ENCODE measurements at regions of chr7 and their contacts with region 1.

Region 1: GRCh38 chr7:44847508-44847920 is 373 bp downstream of the H2AZ2 start:
- DNase-seq: peak; percentile 90
- ATAC-seq: peak; percentile 65
- H3K4me3 Mint-ChIP-seq: peak overlapping the region; percentile 96
- H3K27ac Mint-ChIP-seq: peak overlapping the region; percentile 97
- H3K4me1 Mint-ChIP-seq: peaks cover 33% of the 10 kb centered on the region
- H3K27me3 Mint-ChIP-seq: no peaks in the 10 kb centered on the region
- CTCF ChIP-seq: no peak

Region 2: GRCh38 chr7:44240983-44241510 is 606.5 kb before region 1 on chr7:
- CTCF ChIA-PET with region 1: no interaction called
- POLR2A ChIA-PET with region 1: no interaction called
- intact Hi-C with region 1: loop called (anchors 5 kb)
- DNase-seq: peak; percentile 41
- ATAC-seq: peak; percentile 87
- H3K4me3 Mint-ChIP-seq: peak overlapping the region; percentile 56
- H3K27ac Mint-ChIP-seq: no peak overlapping the region
- H3K4me1 Mint-ChIP-seq: no peaks in the 10 kb centered on the region
- H3K27me3 Mint-ChIP-seq: no peaks in the 10 kb centered on the region
- CTCF ChIP-seq: no peak

Region 3: GRCh38 chr7:44581879-44582603 is 265.5 kb before region 1 on chr7 and contains the start of gene TMED4:
- CTCF ChIA-PET with region 1: interaction called, 4 read pairs
- POLR2A ChIA-PET with region 1: interaction called, 44 read pairs
- intact Hi-C with region 1: loop called (anchors 1 kb)
- DNase-seq: peak; percentile 100
- ATAC-seq: peak; percentile 90
- H3K4me3 Mint-ChIP-seq: peak within 1 kb of the TSS; percentile 90
- H3K27ac Mint-ChIP-seq: peak within 1 kb of the TSS; percentile 95
- H3K4me1 Mint-ChIP-seq: peaks cover 29% of the 10 kb centered on the region
- H3K27me3 Mint-ChIP-seq: peaks cover 2% of the 10 kb centered on the region
- CTCF ChIP-seq: no peak
- total RNA-seq, gene TMED4: 61.7 and 70.1 TPM in 2 replicates

Region 4: DNA sequence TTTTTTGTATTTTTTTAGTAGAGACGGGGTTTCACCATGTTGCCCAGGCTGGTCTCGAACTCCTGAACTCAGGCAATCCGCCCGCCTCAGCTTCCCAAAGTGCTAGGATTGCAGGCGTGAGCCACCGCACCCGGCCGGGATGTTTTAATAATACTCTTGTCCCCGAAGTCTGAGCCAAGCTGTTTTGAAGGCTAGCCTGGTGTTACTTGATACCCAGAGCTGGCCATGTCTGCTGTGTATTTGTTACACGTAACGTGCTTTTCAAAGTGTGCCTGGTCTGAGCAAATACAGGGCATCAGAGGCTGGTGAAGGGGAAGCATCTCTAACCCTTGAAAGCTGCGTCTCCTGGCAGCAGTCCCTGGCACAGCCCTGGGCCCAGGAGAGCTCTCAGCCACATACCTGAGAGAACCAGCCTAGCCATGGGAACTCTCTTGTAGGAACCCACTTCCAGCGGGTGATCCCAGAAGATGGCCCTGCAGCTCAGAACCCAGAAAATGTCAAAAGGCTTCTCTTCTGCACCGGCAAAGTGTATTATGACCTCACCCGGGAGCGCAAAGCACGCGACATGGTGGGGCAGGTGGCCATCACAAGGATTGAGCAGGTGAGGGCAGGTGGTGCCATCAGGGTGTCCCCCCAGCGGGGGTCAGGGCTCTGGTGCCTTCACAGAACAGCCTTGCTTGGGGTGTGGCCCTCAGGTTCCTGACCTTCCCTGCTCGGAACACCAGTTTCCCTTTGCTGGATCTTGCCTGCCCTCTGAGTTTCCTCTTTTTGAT is 140.5 kb before region 1 on chr7:
- CTCF ChIA-PET with region 1: interaction called, 4 read pairs
- POLR2A ChIA-PET with region 1: interaction called, 4 read pairs
- intact Hi-C with region 1: loop called (anchors 1 kb)
- DNase-seq: no peak
- ATAC-seq: no peak
- H3K4me3 Mint-ChIP-seq: no peak overlapping the region
- H3K27ac Mint-ChIP-seq: no peak overlapping the region
- H3K4me1 Mint-ChIP-seq: no peaks in the 10 kb centered on the region
- H3K27me3 Mint-ChIP-seq: no peaks in the 10 kb centered on the region
- CTCF ChIP-seq: no peak

Region 5: DNA sequence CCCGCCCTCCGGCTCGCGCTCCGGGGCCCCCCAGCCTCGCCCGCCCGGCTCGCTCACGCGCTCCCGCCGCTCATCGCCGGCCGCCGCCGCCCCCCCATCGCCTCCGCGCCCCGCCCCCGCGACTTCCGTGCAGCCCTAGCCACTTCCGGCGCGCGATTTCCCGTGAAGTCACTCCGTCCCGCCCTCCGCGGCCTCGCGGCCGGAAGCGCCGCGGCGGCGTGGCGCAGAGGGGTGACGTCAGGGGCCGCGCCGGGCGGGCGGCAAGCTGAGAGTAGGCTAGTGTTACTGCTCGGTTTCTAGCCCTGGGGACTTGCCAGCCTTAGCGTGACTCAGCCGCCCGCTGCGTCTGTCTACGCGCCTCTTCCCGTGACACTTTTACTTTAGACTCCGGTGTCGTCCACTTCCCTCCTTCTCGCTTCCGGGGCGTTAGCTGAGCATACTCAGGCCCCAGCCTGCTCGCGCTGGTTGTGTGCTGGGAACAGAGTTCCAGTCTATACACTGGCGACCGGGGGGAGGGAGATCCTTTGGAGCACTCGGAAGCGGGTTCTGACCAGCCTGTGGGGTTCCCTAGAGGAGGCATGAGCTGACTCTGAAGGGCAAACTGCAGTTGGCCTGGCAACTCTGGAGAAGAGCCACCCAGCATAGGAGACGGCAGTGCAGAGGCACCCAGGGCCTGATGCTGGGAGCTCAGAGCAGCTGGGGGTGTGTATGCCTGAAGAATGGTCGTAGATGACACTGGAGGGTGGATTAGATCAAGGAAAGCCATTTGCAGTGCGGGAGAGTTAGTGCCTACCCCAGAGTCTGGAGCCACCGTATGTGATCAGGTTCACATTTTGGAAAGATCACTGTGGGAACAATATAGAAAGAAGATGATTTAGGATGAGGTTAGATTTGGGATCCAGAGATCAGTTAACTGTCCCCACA is 38.1 kb after region 1 on chr7 and contains the start of gene PURB:
- CTCF ChIA-PET with region 1: no interaction called
- POLR2A ChIA-PET with region 1: interaction called, 32 read pairs
- intact Hi-C with region 1: loop called (anchors 1 kb)
- DNase-seq: peak; percentile 98
- ATAC-seq: peak; percentile 85
- H3K4me3 Mint-ChIP-seq: peak within 1 kb of the TSS; percentile 95
- H3K27ac Mint-ChIP-seq: peak within 1 kb of the TSS; percentile 99
- H3K4me1 Mint-ChIP-seq: peaks cover 59% of the 10 kb centered on the region
- H3K27me3 Mint-ChIP-seq: no peaks in the 10 kb centered on the region
- CTCF ChIP-seq: no peak
- total RNA-seq, gene PURB: 21.3 and 23.8 TPM in 2 replicates

Region 6: GRCh38 chr7:45111298-45112223 is 264.0 kb after region 1 on chr7 and contains the start of gene TBRG4:
- CTCF ChIA-PET with region 1: no interaction called
- POLR2A ChIA-PET with region 1: interaction called, 4 read pairs
- intact Hi-C with region 1: loop called (anchors 1 kb)
- DNase-seq: peak; percentile 94
- ATAC-seq: peak; percentile 93
- H3K4me3 Mint-ChIP-seq: peak within 1 kb of the TSS; percentile 98
- H3K27ac Mint-ChIP-seq: peak within 1 kb of the TSS; percentile 97
- H3K4me1 Mint-ChIP-seq: peaks cover 44% of the 10 kb centered on the region
- H3K27me3 Mint-ChIP-seq: peaks cover 4% of the 10 kb centered on the region
- CTCF ChIP-seq: no peak
- total RNA-seq, gene TBRG4: 109 and 128 TPM in 2 replicates

Region 7: GRCh38 chr7:45267266-45267665 is 419.8 kb after region 1 on chr7:
- CTCF ChIA-PET with region 1: no interaction called
- POLR2A ChIA-PET with region 1: no interaction called
- intact Hi-C with region 1: no loop called
- DNase-seq: no peak
- ATAC-seq: no peak
- H3K4me3 Mint-ChIP-seq: no peak overlapping the region
- H3K27ac Mint-ChIP-seq: no peak overlapping the region
- H3K4me1 Mint-ChIP-seq: no peaks in the 10 kb centered on the region
- H3K27me3 Mint-ChIP-seq: peaks cover 16% of the 10 kb centered on the region
- CTCF ChIP-seq: no peak

Measured in activated B cell treated with CpG ODN at 0.5 μM for 24 hours (primary cell).